ENCODE measurements at regions of chr1 and their contacts with region 1.

Region 1: DNA sequence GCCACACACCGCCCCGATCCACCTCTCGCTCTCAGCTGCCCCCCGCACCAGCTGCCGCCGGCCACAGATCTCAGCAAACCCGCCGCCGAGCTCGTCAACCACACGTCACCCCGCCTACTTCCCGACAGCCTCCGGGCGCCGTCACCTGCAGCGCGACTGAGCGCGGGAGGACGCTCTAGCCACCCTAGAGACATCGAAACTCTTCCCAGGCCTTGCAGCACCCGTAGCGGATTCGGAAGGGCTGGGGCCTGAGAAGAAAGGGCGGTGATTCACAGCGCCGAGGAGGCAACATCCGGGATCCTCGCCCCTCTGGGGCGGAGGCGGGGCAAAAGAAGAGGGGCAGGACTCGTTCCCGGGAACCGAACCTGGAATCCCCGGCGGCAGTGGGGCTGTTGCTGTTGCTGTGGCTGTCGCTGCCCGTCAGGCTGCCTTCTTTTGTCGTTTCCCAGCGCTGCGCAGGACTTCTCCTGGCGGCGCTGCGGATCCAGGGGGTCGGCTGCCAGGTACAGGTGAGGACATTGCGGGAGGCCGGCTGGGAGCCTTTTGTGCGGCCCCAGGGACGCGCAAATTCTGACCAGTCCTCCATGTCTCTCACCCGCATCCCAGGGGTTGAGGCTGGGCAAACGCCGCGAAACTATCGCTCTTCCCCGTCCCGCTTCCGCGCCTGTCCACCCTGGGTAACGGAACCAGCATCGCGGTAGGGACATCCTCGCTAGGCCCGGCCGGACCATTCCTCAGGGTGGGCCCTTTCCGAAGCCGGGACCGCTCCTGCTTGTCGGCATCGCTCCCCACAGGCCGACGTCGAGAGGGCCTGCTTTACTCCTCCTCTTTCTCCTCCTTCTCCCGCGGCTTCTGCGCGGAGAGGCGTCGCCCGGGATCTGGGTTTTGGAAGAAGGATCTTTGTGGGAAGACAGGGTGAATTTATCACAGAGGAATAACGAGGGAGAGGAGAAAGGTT is at the starts of genes RO60 and UCHL5:
- DNase-seq: peak; percentile 99
- total RNA-seq, gene RO60: 70.5 to 80.6 TPM
- total RNA-seq, gene UCHL5: 26.0 to 36.7 TPM

Region 2: DNA sequence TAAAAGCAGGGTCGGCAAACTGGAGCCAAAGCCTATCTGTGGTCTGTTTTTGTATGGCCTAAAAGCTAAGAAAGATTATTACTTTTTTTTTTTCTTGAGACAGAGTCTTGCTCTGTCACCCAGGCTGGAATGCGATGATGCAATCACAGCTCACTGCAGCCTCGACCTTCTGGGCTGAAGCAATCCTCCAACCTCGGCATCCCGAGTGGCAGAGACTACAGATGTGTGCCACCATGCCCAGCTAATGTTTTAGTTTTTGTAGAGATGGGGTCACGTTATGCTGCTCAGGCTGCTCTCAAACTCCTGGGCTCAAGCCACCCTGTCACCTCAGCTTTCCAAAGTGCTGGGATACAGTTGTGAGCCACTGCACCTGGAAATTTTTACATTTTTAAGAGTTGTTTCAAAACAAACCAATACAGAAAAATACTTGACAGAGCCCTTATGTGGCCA is 52.1 kb after region 1 on chr1:
- intact Hi-C with region 1: loop called in 1 of 2 experiments (anchors 10 kb)
- DNase-seq: peak; percentile 89

Region 3: GRCh38 chr1:193121616-193122593 is 62.4 kb after region 1 on chr1 and contains the start of gene CDC73:
- intact Hi-C with region 1: loop called (anchors 2 to 10 kb)
- DNase-seq: peak; percentile 99
- total RNA-seq, gene CDC73: 70.0 to 79.1 TPM